ENCODE measurements at regions of chr16 and their contacts with region 1.

Region 1: DNA sequence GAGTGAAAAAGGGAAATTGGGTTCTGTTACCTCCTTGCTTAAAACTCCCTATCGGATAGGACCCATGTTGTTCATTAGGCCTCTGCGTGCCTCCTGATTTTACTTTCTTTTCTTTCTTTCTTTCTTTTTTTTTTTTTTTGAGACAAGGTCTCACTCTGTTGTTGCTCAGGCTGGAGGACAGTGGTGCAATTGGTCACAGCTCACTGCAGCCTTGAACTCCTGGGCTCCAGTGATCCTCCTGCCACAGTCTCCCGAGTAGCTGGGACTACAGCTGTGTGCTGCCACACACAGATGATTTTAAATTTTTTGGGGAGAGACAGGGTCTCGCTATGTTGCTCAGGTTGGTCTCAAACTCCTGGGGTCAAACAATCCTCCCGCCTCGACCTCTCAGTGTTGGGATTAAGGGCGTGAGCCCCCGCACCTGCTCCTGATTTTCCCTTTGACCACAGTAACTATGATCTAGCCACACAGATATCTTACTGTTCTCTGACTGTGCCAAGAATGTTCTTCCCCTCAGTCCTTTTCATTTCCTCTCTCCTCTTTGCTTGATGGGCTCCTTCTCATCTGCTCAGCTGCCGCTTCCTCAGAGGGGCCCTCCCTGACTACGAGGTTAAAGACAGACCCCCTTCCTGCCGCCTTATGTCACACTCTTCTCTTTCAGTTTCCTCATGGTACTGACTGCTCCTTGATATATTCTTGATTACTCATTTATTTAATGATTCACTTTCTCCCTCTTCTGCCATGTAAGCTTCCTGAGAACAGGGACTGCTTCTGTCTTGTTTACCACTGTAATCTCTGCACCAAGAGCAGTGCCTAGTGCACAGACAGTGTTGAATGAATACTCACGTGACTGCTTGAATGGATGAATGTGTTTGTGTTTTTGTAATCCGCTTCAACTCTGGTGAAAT is 44.3 kb downstream of the LCMT1 start:
- DNase-seq: peak; percentile 70
- ATAC-seq: peak; percentile 95
- H3K4me3 Mint-ChIP-seq: peak overlapping the region; percentile 11
- H3K27ac Mint-ChIP-seq: peak overlapping the region; percentile 95
- H3K4me1 Mint-ChIP-seq: peaks cover 19% of the 10 kb centered on the region
- H3K27me3 Mint-ChIP-seq: no peaks in the 10 kb centered on the region

Region 2: DNA sequence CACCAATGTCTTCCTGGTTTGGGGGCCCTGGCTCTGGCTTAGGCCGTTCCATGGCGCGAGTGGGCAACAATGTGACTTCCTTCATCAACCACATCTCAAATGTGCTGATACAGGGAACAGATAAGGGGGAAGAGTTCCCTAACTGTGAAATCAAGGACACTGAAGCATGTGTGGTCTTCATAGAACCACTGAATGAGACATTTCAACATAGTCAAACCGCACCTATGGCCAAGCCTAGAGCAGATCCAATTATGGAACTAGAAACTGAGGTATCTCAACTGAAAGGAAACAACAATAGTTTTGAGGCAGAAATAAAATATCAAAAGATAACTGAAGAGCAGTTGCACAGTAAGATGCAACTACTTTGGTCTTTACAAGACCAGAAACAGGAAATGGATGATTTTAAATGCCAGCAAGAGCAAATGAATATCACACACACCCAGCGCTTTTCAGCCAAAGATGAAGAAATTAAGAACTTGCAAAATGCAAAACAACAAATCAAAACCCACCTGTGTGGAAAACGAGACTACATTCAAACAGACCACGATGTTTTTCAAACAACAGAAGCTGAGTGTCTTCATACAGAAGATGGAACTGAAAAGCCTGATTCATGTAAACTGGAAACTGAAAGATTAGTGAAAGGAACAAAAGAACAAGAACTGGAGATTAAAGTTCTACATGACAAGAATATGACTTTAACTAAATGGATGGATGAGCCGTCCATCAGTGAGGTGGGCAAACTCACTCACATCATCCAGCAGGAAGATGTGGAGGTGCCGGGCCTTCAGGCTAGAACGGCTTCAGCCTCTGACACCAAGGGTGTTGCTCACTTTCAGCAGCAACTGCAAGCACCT is 62.4 kb before region 1 on chr16:
- CTCF ChIA-PET with region 1: no interaction called
- POLR2A ChIA-PET with region 1: interaction called, 7 read pairs
- intact Hi-C with region 1: loop called in 1 of 2 experiments (anchors 1 kb)
- DNase-seq: peak; percentile 42
- ATAC-seq: peak; percentile 79
- H3K4me3 Mint-ChIP-seq: peak overlapping the region; percentile 17
- H3K27ac Mint-ChIP-seq: peak overlapping the region; percentile 90
- H3K4me1 Mint-ChIP-seq: peaks cover 28% of the 10 kb centered on the region
- H3K27me3 Mint-ChIP-seq: no peaks in the 10 kb centered on the region

Region 3: GRCh38 chr16:25126820-25127232 is 29.0 kb before region 1 on chr16:
- CTCF ChIA-PET with region 1: no interaction called
- POLR2A ChIA-PET with region 1: no interaction called
- intact Hi-C with region 1: loop called in 1 of 2 experiments (anchors 1 kb)
- DNase-seq: peak; percentile 78
- ATAC-seq: peak; percentile 90
- H3K4me3 Mint-ChIP-seq: no peak overlapping the region
- H3K27ac Mint-ChIP-seq: peak overlapping the region; percentile 45
- H3K4me1 Mint-ChIP-seq: peaks cover 34% of the 10 kb centered on the region
- H3K27me3 Mint-ChIP-seq: no peaks in the 10 kb centered on the region

Measured in activated CD4-positive, alpha-beta T cell treated with anti-CD3 and anti-CD28 coated beads for 36 hours (primary cell).